ENCODE measurements at regions of chr6 and their contacts with region 1.

Region 1: DNA sequence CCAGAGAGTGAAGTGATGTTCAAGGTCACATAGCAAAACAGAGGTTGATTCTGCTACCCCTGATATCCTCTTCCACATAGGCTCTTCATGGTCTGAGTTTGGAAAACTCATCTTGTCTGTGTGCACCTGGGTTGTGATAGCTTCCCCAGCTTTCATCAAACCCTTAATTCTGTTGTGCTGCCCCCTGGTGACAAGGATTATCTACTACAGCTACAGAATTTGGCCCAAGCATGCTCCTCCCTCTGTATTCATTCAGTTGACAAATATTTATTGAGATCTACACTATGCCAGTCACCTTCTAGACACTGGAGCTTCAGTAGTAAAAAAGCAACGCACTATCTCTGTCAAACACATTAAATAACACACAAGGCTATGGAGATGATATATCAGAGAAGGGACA is 50.4 kb downstream of the SMPDL3A start:
- DNase-seq: peak in 40 of 42 donors; percentile 11 to 91 (median 68)

Region 2: GRCh38 chr6:122730775-122731386 is 108.6 kb before region 1 on chr6:
- intact Hi-C with region 1: loop called (anchors 5 kb)
- DNase-seq: peak in 18 of 42 donors; percentile 20 to 67 (median 36)

Region 3: DNA sequence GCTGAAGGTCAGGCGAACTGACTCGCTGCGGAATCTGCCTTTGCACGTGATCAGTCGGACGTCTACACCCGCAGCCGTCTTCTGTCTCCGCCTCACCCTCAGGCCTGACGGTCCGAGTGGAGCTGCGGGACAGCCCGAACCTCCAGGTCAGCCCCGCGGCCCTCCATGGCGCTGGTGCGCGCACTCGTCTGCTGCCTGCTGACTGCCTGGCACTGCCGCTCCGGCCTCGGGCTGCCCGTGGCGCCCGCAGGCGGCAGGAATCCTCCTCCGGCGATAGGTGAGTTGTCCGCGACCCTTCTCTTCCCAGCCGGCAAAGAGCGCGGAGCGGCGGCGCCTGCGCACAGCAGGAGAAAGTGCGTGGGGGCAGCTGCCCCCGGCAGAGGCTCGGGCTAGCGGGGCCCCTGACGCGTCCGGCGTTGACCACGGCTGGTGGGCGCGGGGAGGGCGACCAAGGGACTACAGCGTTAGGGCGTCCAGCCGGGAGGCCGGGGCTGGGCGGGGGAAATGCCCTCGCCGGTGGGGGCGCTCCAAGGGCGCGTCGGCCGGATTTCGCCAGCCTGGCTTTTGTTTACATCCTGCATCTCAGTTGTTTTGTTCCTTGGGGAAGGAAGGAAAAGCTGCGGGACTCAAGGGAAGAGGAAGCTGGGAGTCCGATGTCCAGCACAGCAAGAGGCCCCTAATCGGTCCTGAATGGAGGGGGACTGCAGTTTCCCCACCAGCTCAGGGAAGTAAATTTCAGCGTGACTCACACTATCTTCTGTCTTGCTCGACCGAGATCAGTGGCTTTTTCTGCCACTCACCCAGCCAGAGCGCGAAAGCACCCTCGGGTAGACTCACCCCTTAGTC is 50.1 kb before region 1 on chr6 and contains the start of gene SMPDL3A:
- intact Hi-C with region 1: loop called (anchors 10 kb)
- DNase-seq: peak; percentile 46 to 89 (median 78)